Colonic mucosa (tissue), 4 donors: ENCODE measurements at regions of chr11 and their contacts with region 1.

Region 1: GRCh38 chr11:72483412-72484186 is 49.3 kb upstream of the CLPB start:
- DNase-seq: peak; percentile 26
- H3K4me3 ChIP-seq: no peak overlapping the region
- H3K27ac ChIP-seq: no peak overlapping the region
- H3K4me1 ChIP-seq: no peaks in the 10 kb centered on the region
- H3K27me3 ChIP-seq: no peaks in the 10 kb centered on the region
- CTCF ChIP-seq: no peak

Region 2: GRCh38 chr11:72217841-72218240 is 265.8 kb before region 1 on chr11:
- intact Hi-C with region 1: no loop called
- DNase-seq: no peak
- H3K4me3 ChIP-seq: no peak overlapping the region
- H3K27ac ChIP-seq: no peak overlapping the region
- H3K4me1 ChIP-seq: no peaks in the 10 kb centered on the region
- H3K27me3 ChIP-seq: no peaks in the 10 kb centered on the region
- CTCF ChIP-seq: no peak

Region 3: GRCh38 chr11:72333661-72334060 is 149.9 kb before region 1 on chr11:
- intact Hi-C with region 1: no loop called
- DNase-seq: no peak
- H3K4me3 ChIP-seq: no peak overlapping the region
- H3K27ac ChIP-seq: no peak overlapping the region
- H3K4me1 ChIP-seq: no peaks in the 10 kb centered on the region
- H3K27me3 ChIP-seq: no peaks in the 10 kb centered on the region
- CTCF ChIP-seq: no peak

Region 4: DNA sequence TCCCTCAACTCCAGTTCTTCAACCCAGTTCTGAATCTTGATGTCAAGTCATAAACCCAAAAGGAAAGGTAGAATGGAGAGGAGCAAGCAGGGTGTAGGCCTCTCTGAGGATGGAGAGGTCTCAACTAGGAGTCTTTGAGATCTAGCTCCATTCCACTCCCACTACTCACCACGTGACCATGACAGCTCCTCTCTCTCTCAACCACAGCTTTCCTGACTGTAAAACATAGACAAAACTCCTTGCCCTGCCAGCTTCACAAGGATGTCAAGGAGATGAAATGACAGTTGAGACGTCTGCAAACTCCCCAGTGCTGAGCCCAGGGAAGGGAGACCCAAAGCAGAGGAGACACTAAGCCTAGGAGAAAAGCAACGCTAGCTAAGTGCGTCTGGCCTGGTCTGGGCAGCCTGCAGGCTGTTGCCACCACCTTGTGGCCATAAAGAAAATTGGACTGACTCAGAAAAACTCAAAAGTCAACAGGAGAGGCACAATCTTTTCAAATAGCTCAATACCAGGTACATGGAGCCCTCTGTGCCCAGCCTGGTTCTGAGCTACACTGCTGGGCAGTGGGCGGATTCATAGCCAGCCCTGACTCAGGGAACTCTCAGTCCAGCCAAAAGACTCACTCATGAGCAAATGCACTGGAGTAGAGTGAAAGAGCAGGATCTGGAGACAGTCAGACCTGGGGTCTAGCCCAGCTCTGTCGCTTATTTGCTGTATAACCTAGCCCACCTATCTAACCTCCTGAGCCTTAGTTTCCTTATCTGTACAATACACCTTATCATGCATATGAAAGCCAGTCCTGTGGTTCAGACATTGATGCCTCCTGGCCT is 52.6 kb before region 1 on chr11:
- intact Hi-C with region 1: no loop called
- DNase-seq: no peak
- H3K4me3 ChIP-seq: no peak overlapping the region
- H3K27ac ChIP-seq: no peak overlapping the region
- H3K4me1 ChIP-seq: no peaks in the 10 kb centered on the region
- H3K27me3 ChIP-seq: no peaks in the 10 kb centered on the region
- CTCF ChIP-seq: peak; percentile 70

Region 5: DNA sequence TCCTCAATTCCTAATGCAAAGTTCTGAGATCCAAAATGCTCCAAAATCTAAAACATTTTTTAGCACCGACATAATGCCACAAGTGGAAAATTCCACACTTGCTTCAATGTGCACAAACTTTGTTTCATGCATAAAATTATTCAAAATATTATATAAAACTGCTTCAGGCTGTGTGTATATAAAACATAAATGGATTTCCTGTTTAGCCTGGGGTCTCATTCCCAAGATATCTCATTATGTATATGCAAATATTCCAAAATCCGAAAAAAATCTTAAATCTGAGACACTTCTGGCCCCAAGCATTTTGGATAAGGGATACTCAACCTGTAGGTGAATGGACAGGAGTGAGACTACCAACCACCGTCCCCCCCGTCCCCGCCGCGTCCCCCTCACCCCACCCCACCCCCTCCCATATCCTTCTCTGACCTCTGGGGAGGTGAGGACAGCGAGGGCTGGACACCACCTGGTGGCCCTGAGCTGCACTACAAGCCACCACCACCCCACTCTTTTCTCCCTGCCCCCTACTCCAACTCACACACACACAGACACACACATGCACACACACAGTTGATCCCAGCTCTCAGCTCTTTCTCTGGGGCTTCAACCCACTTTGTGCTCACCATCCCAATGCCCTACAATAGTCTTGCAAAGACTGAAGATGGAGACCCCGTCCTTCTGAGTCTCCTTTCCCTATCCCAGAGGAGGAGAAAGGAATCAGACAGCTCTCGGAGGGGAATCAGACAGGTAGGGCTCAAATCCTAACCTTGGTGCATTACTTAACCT is 89.7 kb after region 1 on chr11:
- intact Hi-C with region 1: loop called (anchors 5 kb)
- DNase-seq: no peak
- H3K4me3 ChIP-seq: no peak overlapping the region
- H3K27ac ChIP-seq: no peak overlapping the region
- H3K4me1 ChIP-seq: no peaks in the 10 kb centered on the region
- H3K27me3 ChIP-seq: no peaks in the 10 kb centered on the region
- CTCF ChIP-seq: no peak